ENCODE measurements at regions of chr20 and their contacts with region 1.

Region 1: GRCh38 chr20:52230409-52230808 is 38.8 kb upstream of the ZFP64 start:
- DNase-seq: no peak

Region 2: DNA sequence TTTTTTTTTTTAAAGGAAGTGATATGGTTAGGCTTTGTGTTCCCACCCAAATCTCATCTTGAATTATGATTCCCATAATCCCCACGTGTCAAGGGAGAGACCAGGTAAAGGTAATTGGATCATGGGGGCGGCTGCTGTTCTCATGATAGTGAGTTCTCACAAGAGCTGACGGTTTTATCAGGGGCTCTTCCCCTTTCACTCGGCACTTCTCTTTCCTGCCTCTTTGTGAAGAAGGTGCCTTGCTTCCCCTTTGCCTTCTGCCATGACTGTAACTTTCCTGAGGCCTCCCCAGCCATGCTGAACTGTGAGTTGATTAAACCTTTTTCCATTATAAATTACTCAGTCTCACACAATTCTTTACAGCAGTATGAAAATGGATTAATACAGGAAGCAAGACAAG is 103.1 kb before region 1 on chr20:
- in situ Hi-C with region 1: loop called (anchors 10 kb)
- DNase-seq: no peak